ENCODE measurements at regions of chr3 and their contacts with region 1.

Region 1: GRCh38 chr3:27253831-27254230 is 115.4 kb downstream of the NEK10 start:
- DNase-seq: no peak
- ATAC-seq: peak; percentile 93
- H3K4me3 ChIP-seq: no peak overlapping the region
- H3K27ac ChIP-seq: no peak overlapping the region
- H3K4me1 ChIP-seq: no peaks in the 10 kb centered on the region
- H3K27me3 ChIP-seq: no peaks in the 10 kb centered on the region
- CTCF ChIP-seq: peak; percentile 71

Region 2: GRCh38 chr3:27134165-27134796 is 119.5 kb before region 1 on chr3:
- CTCF ChIA-PET with region 1: interaction called, 11 read pairs
- POLR2A ChIA-PET with region 1: no interaction called
- in situ Hi-C with region 1: no loop called
- intact Hi-C with region 1: loop called (anchors 1 kb)
- DNase-seq: peak; percentile 51
- ATAC-seq: peak; percentile 89
- H3K4me3 ChIP-seq: no peak overlapping the region
- H3K27ac ChIP-seq: no peak overlapping the region
- H3K4me1 ChIP-seq: no peaks in the 10 kb centered on the region
- H3K27me3 ChIP-seq: no peaks in the 10 kb centered on the region
- CTCF ChIP-seq: peak; percentile 88

Region 3: DNA sequence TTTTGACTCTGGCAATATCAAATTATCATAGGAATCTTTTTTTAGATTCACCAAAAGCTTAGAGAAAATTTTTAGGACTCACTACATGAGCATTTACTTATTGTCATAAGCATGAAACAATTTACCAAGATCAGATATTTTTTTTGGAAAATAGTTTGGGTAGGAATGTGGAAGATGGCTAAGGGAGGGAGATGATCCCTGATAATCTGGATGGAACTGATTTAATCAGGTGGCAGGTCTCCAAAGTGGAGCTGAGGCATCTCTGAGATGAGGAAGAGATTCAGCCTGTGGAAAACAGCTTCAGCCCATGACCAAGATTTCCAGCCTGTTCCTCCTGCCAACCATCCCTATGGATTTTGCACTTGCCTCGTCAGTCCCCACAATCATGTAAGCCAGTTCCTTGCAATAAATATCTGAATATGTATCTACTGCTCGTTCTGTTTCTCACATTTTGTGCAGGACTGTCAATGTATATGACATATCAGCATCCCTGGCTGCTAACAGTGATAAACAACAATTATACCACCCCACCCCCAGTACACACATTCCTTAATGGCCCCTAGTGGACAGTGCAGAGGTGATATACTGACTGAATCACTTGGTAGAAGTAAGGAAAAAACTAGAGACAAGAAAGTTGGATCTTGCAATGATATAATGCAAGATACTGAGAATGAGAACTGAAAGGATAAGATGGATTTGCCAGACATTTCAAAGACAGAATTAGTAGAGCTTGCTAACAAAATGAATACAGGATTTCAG is 68.4 kb before region 1 on chr3:
- CTCF ChIA-PET with region 1: no interaction called
- POLR2A ChIA-PET with region 1: no interaction called
- in situ Hi-C with region 1: no loop called
- intact Hi-C with region 1: no loop called
- DNase-seq: no peak
- ATAC-seq: no peak
- H3K4me3 ChIP-seq: no peak overlapping the region
- H3K27ac ChIP-seq: no peak overlapping the region
- H3K4me1 ChIP-seq: no peaks in the 10 kb centered on the region
- H3K27me3 ChIP-seq: no peaks in the 10 kb centered on the region
- CTCF ChIP-seq: no peak

Measured in Panc1 (cell line).